Dendritic cell treated with granulocyte-macrophage colony-stimulating factor and Interleukin-4, amounts not matched to agents 40 ng/mL and 50 ng/mL, for 4 days (primary cell): ENCODE measurements at regions of chr20 and their contacts with region 1.

Region 1: GRCh38 chr20:32052090-32052777 is at the start of gene HCK:
- H3K4me3 Mint-ChIP-seq: peak within 1 kb of the TSS; percentile 85
- H3K27ac Mint-ChIP-seq: peak within 1 kb of the TSS; percentile 99
- H3K4me1 Mint-ChIP-seq: peaks cover 60% of the 10 kb centered on the region
- H3K27me3 Mint-ChIP-seq: no peaks in the 10 kb centered on the region

Region 2: DNA sequence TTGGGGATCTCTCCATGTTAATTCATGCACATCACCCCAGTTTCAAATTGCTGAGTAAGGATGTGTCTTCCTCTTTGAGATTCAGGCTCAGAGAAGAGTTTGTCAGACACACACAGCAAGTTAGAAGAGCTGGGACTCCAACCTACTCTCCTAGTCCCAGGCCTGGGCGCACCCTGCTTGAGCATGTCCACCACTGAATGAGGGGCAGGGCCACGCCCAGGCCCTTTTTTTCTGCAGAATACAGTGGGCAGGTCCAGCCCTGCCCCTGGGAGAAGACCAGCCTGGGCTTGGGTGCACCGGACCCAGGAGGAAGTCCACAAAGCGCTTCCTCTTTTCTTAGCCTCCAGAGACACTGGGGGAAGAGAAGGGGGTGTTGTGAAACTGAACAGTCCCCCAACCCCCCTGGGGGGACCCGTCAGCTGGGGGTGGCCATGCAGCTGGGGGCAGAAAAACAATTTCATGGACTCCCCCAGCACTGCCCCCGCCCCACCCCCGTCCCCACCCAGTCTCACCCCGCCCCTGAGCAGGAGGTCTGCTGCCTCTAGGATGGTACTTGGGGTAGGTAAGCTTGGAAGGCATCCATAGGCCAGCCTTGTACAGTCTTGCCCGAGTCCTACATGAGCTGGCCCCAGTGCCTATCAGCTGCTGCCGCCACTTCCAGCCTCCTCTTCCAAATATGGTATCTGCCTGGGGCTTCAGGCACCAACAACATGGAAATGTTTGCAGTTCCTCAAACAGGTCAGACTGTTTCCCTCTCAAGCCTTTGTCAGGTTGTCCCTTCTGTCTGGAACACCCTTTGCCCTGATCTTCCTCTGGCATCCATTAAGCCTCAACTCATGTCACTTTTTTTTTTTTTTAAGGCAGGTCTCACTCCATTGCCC is 11.9 kb before region 1 on chr20:
- intact Hi-C with region 1: loop called (anchors 1 kb)
- H3K4me3 Mint-ChIP-seq: peak overlapping the region; percentile 56
- H3K27ac Mint-ChIP-seq: peak overlapping the region; percentile 86
- H3K4me1 Mint-ChIP-seq: peaks cover 78% of the 10 kb centered on the region
- H3K27me3 Mint-ChIP-seq: no peaks in the 10 kb centered on the region

Region 3: GRCh38 chr20:32067234-32067821 is 15.1 kb after region 1 on chr20:
- intact Hi-C with region 1: loop called (anchors 2 kb)
- H3K4me3 Mint-ChIP-seq: peak overlapping the region; percentile 30
- H3K27ac Mint-ChIP-seq: peak overlapping the region; percentile 87
- H3K4me1 Mint-ChIP-seq: peaks cover 83% of the 10 kb centered on the region
- H3K27me3 Mint-ChIP-seq: no peaks in the 10 kb centered on the region